Activated CD4-positive, alpha-beta T cell treated with anti-CD3 and anti-CD28 coated beads for 36 hours (primary cell): ENCODE measurements at regions of chr5 and their contacts with region 1.

Region 1: GRCh38 chr5:118987988-118988865 is at the start of gene DTWD2:
- DNase-seq: peak; percentile 96
- ATAC-seq: peak; percentile 90
- H3K4me3 Mint-ChIP-seq: peak within 1 kb of the TSS; percentile 63
- H3K27ac Mint-ChIP-seq: peak within 1 kb of the TSS; percentile 34
- H3K4me1 Mint-ChIP-seq: peaks cover 23% of the 10 kb centered on the region
- H3K27me3 Mint-ChIP-seq: peaks cover 1% of the 10 kb centered on the region
- total RNA-seq, gene DTWD2: 3.6 to 4.5 TPM

Region 2: DNA sequence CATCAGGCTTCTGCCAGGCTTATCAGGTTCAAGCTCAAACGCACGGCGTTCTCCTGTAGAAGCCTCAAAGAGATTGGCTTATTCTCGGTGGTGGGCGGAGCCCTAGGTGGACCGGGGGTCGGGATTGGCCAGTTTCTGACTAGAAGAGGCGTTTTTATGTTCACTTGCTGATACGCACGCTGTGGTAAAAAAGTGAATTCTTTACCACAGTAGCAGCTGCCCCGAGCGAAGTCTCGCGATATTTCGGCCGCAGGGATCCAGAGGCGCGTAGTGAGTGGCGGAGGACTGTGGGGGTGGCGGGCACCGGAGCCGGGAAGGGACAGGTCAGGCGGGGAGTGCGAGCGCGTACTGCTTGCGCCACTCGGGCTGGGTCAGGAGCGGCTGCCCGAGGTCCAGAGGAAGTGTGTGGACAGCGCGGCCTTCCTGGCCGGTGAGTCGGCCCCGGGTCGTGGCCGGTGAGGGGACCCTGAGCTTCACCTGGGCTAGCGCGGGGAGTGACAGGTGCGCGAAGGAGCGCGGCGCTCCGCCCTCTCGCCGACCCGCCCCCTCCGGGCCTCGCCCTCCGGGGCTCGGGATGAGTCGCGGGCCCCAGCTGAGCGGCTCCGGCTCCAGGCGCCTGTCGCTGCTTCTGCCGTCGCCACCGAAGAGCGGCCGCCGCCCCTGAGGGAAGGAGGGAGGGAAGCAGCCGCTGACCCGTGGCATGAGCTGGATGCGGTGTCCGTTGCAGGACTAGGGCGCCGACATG is 82.8 kb after region 1 on chr5 and contains the start of gene DMXL1:
- CTCF ChIA-PET with region 1: interaction called, 18 read pairs
- POLR2A ChIA-PET with region 1: no interaction called
- intact Hi-C with region 1: loop called (anchors 1 to 2 kb)
- DNase-seq: peak; percentile 99
- ATAC-seq: peak; percentile 87
- H3K4me3 Mint-ChIP-seq: peak within 1 kb of the TSS; percentile 92
- H3K27ac Mint-ChIP-seq: peak within 1 kb of the TSS; percentile 96
- H3K4me1 Mint-ChIP-seq: peaks cover 35% of the 10 kb centered on the region
- H3K27me3 Mint-ChIP-seq: no peaks in the 10 kb centered on the region
- total RNA-seq, gene DMXL1: 23.5 to 31.1 TPM

Region 3: GRCh38 chr5:119315516-119315949 is 327.3 kb after region 1 on chr5:
- CTCF ChIA-PET with region 1: interaction called, 5 read pairs
- POLR2A ChIA-PET with region 1: no interaction called
- intact Hi-C with region 1: loop called in 1 of 2 experiments (anchors 5 kb)
- DNase-seq: peak; percentile 78
- ATAC-seq: peak; percentile 77
- H3K4me3 Mint-ChIP-seq: peak overlapping the region; percentile 28
- H3K27ac Mint-ChIP-seq: peak overlapping the region; percentile 91
- H3K4me1 Mint-ChIP-seq: peaks cover 91% of the 10 kb centered on the region
- H3K27me3 Mint-ChIP-seq: no peaks in the 10 kb centered on the region

Region 4: GRCh38 chr5:119435436-119436132 is 447.4 kb after region 1 on chr5:
- CTCF ChIA-PET with region 1: interaction called, 30 read pairs
- POLR2A ChIA-PET with region 1: interaction called, 4 read pairs
- intact Hi-C with region 1: loop called (anchors 1 kb)
- DNase-seq: peak; percentile 86
- ATAC-seq: peak; percentile 83
- H3K4me3 Mint-ChIP-seq: no peak overlapping the region
- H3K27ac Mint-ChIP-seq: no peak overlapping the region
- H3K4me1 Mint-ChIP-seq: peaks cover 8% of the 10 kb centered on the region
- H3K27me3 Mint-ChIP-seq: peaks cover 21% of the 10 kb centered on the region

Region 5: DNA sequence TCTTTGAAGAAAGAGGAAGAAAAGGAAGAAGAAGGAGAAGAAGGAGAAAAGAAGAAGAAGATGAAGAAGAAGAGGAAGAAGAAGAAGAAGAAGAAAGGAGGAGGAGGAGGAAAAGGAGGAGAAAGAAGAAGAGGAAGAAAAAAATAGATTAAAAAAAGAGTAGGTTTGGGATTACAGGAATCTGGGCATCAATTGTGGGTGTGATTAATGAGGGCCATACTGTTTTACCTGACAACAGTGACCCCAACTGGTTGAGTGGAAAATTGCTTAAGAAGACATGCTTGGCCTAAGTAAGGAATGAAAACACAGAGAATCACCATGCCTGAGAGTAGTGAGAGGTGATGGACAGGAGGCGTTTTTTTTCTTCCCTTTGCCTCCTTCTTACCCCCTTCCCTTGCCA is 755.7 kb after region 1 on chr5:
- CTCF ChIA-PET with region 1: no interaction called
- POLR2A ChIA-PET with region 1: no interaction called
- intact Hi-C with region 1: loop called in 1 of 2 experiments (anchors 1 kb)
- DNase-seq: peak; percentile 10
- ATAC-seq: peak; percentile 51
- H3K4me3 Mint-ChIP-seq: no peak overlapping the region
- H3K27ac Mint-ChIP-seq: no peak overlapping the region
- H3K4me1 Mint-ChIP-seq: no peaks in the 10 kb centered on the region
- H3K27me3 Mint-ChIP-seq: peaks cover 2% of the 10 kb centered on the region

Region 6: GRCh38 chr5:120463991-120464626 is 1475.9 kb after region 1 on chr5 and contains the start of gene PRR16:
- CTCF ChIA-PET with region 1: no interaction called
- POLR2A ChIA-PET with region 1: no interaction called
- intact Hi-C with region 1: loop called (anchors 5 to 10 kb)
- DNase-seq: peak; percentile 42
- ATAC-seq: peak; percentile 81
- H3K4me3 Mint-ChIP-seq: peak within 1 kb of the TSS; percentile 35
- H3K27ac Mint-ChIP-seq: no peak within 1 kb of the TSS
- H3K4me1 Mint-ChIP-seq: peaks cover 3% of the 10 kb centered on the region
- H3K27me3 Mint-ChIP-seq: peaks cover 41% of the 10 kb centered on the region
- total RNA-seq, gene PRR16: not detected